Activated T-helper 2 cell treated with anti-CD3 and anti-CD28 coated beads, Interferon-gamma antibody, Interleukin-2, Interleukin-4, amounts not matched to agents 10 μg/mL and 5 μg/mL and 100 μg/mL, durations not matched to agents 14 hours and 24 hours and 36 hours (primary cell): ENCODE measurements at regions of chr14 and their contacts with region 1.

Region 1: GRCh38 chr14:65478596-65478995 is 66.1 kb downstream of the FUT8 start:
- DNase-seq: no peak
- H3K4me3 Mint-ChIP-seq: no peak overlapping the region
- H3K27ac Mint-ChIP-seq: peak overlapping the region; percentile 19
- H3K4me1 Mint-ChIP-seq: peaks cover 73% of the 10 kb centered on the region
- H3K27me3 Mint-ChIP-seq: no peaks in the 10 kb centered on the region

Region 2: GRCh38 chr14:65170768-65171507 is 307.7 kb before region 1 on chr14:
- intact Hi-C with region 1: loop called (anchors 5 kb)
- DNase-seq: peak; percentile 53
- H3K4me3 Mint-ChIP-seq: peak overlapping the region; percentile 59
- H3K27ac Mint-ChIP-seq: peak overlapping the region; percentile 75
- H3K4me1 Mint-ChIP-seq: peaks cover 33% of the 10 kb centered on the region
- H3K27me3 Mint-ChIP-seq: peaks cover 2% of the 10 kb centered on the region

Region 3: GRCh38 chr14:65214741-65215140 is 263.9 kb before region 1 on chr14:
- intact Hi-C with region 1: no loop called
- DNase-seq: no peak
- H3K4me3 Mint-ChIP-seq: no peak overlapping the region
- H3K27ac Mint-ChIP-seq: no peak overlapping the region
- H3K4me1 Mint-ChIP-seq: peaks cover 39% of the 10 kb centered on the region
- H3K27me3 Mint-ChIP-seq: no peaks in the 10 kb centered on the region

Region 4: DNA sequence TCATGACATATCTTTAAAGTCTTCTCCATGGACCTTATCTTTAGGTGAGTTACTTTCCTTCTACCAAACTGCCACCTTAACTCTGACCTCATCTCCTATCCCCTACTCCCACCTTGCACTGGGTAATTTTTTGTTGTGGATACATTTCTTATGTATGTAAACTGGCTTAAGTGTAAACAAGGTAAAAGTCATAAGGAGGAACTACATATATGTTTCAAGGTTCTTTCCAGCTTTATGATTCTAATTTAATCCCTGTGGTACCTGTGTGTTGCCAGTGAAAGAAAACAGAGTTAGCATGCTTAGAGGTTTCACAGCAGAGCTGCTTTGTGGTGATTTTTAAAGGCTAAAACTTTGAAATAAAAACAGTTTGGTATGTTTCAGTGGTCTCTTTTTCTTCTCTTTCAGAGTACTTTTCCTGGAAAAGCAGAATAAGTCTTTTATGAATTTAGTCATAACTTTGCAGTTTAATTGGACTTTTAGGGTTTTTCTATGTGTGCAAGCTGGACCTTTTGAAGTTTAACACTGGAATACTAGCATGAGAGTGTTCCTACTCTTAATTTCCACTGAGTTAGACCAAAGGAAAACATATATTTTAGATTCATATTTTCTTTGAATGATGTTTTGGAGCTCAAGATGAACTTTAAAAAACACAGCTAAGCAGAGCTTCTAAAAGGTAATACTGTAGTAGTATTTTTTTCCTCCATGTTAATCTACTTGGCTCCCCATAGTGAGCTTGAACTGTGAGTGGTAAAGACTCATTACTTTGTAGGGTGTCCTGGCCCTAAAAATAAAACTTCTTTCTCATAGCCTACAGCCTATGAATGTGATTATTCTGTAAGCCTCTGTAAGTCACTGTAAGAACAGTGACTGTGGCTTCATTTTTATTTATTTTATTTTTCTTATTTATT is 39.3 kb after region 1 on chr14:
- intact Hi-C with region 1: loop called (anchors 5 kb)
- DNase-seq: no peak
- H3K4me3 Mint-ChIP-seq: no peak overlapping the region
- H3K27ac Mint-ChIP-seq: peak overlapping the region; percentile 88
- H3K4me1 Mint-ChIP-seq: peaks cover 40% of the 10 kb centered on the region
- H3K27me3 Mint-ChIP-seq: no peaks in the 10 kb centered on the region

Region 5: GRCh38 chr14:65537762-65538161 is 59.2 kb after region 1 on chr14:
- intact Hi-C with region 1: no loop called
- DNase-seq: no peak
- H3K4me3 Mint-ChIP-seq: no peak overlapping the region
- H3K27ac Mint-ChIP-seq: no peak overlapping the region
- H3K4me1 Mint-ChIP-seq: peaks cover 3% of the 10 kb centered on the region
- H3K27me3 Mint-ChIP-seq: no peaks in the 10 kb centered on the region